ENCODE measurements at regions of chr10 and their contacts with region 1.

Region 1: GRCh38 chr10:15106352-15107013 is 9.3 kb downstream of the RPP38 start:
- DNase-seq: peak; percentile 81
- ATAC-seq: peak; percentile 98
- H3K4me3 Mint-ChIP-seq: no peak overlapping the region
- H3K27ac Mint-ChIP-seq: peak overlapping the region; percentile 58
- H3K4me1 Mint-ChIP-seq: peaks cover 9% of the 10 kb centered on the region
- H3K27me3 Mint-ChIP-seq: no peaks in the 10 kb centered on the region

Region 2: DNA sequence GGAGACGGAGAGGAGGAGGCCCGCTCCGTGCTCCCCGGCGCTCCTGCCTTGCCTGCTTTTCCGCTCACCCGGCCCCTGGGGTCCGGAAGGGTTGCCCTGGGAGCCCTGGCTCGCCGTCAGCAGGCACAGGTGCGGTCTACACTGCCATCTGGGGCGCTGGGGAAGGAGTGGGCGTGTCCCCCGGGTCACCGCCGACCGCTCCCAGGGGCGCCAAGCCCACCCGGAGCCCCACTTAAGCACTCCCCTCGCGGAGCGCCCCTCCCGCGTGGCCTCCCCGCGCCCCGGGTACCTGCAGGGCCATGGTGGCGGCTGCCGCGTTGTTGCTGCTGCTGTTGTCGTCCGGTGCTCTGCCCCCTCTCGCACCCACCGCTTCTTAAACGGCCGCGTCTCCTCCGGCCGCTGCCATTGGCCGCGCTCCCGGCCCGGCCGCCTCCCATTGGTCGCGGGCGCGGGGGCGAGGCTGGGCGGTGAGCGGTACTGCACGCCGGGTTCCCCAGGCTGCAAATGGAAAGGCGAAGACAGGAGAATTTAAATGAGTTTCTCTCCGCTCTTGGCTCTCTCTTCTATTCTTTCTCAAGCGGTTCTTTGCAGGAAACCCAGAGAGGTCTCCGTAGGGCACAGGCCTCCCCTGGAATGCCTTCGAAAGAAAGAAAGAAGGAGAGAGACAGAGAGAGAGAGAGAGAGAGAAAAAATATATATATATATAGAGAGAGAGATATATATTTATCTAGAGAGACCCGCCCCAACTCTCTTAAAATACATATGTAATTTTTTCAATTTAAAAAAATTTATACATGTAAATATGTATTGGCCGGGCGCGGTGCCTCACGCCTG is 17.8 kb before region 1 on chr10 and contains the start of gene ACBD7:
- CTCF ChIA-PET with region 1: interaction called, 4 read pairs
- POLR2A ChIA-PET with region 1: no interaction called
- intact Hi-C with region 1: loop called in 1 of 2 experiments (anchors 1 kb)
- DNase-seq: peak; percentile 91
- ATAC-seq: peak; percentile 91
- H3K4me3 Mint-ChIP-seq: peak within 1 kb of the TSS; percentile 67
- H3K27ac Mint-ChIP-seq: no peak within 1 kb of the TSS
- H3K4me1 Mint-ChIP-seq: peaks cover 19% of the 10 kb centered on the region
- H3K27me3 Mint-ChIP-seq: no peaks in the 10 kb centered on the region
- total RNA-seq, gene ACBD7: 2.4 to 2.6 TPM

Region 3: GRCh38 chr10:15122477-15123030 is 16.1 kb after region 1 on chr10:
- CTCF ChIA-PET with region 1: interaction called, 16 read pairs
- POLR2A ChIA-PET with region 1: interaction called, 3 read pairs
- intact Hi-C with region 1: no loop called
- DNase-seq: peak; percentile 47
- ATAC-seq: peak; percentile 72
- H3K4me3 Mint-ChIP-seq: peak overlapping the region; percentile 40
- H3K27ac Mint-ChIP-seq: peak overlapping the region; percentile 92
- H3K4me1 Mint-ChIP-seq: peaks cover 36% of the 10 kb centered on the region
- H3K27me3 Mint-ChIP-seq: no peaks in the 10 kb centered on the region

Region 4: GRCh38 chr10:15461353-15462108 is 355.0 kb after region 1 on chr10:
- CTCF ChIA-PET with region 1: no interaction called
- POLR2A ChIA-PET with region 1: no interaction called
- intact Hi-C with region 1: no loop called
- DNase-seq: peak; percentile 8
- ATAC-seq: peak; percentile 36
- H3K4me3 Mint-ChIP-seq: no peak overlapping the region
- H3K27ac Mint-ChIP-seq: no peak overlapping the region
- H3K4me1 Mint-ChIP-seq: peaks cover 7% of the 10 kb centered on the region
- H3K27me3 Mint-ChIP-seq: peaks cover 17% of the 10 kb centered on the region

Measured in activated CD4-positive, alpha-beta T cell treated with anti-CD3 and anti-CD28 coated beads for 36 hours (primary cell).